PC-9 (cell line): ENCODE measurements at regions of chr3 and their contacts with region 1.

Region 1: GRCh38 chr3:194879991-194880939 is 194.6 kb downstream of the FAM43A start:
- DNase-seq: no peak
- H3K4me3 ChIP-seq: no peak overlapping the region
- H3K27ac ChIP-seq: no peak overlapping the region
- H3K4me1 ChIP-seq: no peaks in the 10 kb centered on the region
- H3K27me3 ChIP-seq: no peaks in the 10 kb centered on the region
- CTCF ChIP-seq: no peak

Region 2: DNA sequence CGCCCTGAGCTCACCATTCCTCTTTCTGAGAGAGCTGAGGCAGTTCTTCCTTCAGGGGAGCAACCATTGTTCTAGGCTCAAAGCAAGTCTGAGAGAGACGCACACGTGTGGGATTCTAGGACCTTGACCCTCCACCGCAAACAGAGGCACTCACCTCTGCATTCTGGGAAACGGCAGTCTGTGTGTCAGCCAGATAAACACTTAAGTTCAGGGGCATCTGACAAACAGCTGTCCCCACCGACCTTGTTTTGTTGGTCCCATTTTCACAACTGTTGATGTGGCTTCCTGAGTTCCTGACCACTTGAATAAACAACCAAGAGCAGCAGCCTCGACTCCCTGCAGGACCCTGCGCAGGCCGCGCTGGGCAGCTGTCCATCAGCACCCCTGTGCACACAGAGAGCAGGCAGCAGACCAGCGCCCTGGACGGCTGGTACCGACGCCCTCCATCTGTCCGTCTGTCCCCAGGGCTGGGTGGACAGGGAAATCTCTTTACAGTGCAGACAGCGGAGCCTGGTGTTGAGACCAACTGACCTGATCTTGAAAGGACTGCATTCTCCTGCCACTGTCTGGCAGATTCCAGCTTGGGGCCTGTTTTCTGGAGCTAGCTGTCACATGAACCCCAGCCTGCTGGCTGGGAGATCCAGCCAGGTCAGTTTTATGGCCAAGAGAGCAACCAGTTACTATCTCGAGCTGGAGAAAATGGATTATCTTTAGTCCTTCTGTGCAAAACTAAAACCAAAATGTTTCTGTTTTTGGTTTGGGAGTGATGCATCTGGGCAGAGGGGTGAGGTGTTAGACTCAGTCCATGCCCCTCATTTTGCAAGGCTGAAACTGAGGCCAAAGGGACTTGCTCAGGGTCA is 130.4 kb before region 1 on chr3:
- CTCF ChIA-PET with region 1: no interaction called
- POLR2A ChIA-PET with region 1: interaction called, 40 read pairs
- intact Hi-C with region 1: no loop called
- DNase-seq: peak in 1 of 2 experiments; percentile 36
- H3K4me3 ChIP-seq: no peak overlapping the region
- H3K27ac ChIP-seq: no peak overlapping the region
- H3K4me1 ChIP-seq: no peaks in the 10 kb centered on the region
- H3K27me3 ChIP-seq: no peaks in the 10 kb centered on the region
- CTCF ChIP-seq: no peak

Region 3: GRCh38 chr3:194808640-194809097 is 71.6 kb before region 1 on chr3:
- CTCF ChIA-PET with region 1: interaction called, 13 read pairs
- POLR2A ChIA-PET with region 1: no interaction called
- intact Hi-C with region 1: no loop called
- DNase-seq: peak in 1 of 2 experiments; percentile 27
- H3K4me3 ChIP-seq: no peak overlapping the region
- H3K27ac ChIP-seq: no peak overlapping the region
- H3K4me1 ChIP-seq: 0 out of 2 replicates have a peak, but pooled peaks cover 5% of the 10 kb centered on the region
- H3K27me3 ChIP-seq: 0 out of 2 replicates have a peak, but pooled peaks cover 13% of the 10 kb centered on the region
- CTCF ChIP-seq: no peak

Region 4: GRCh38 chr3:194930377-194931204 is 50.3 kb after region 1 on chr3:
- CTCF ChIA-PET with region 1: no interaction called
- POLR2A ChIA-PET with region 1: no interaction called
- intact Hi-C with region 1: no loop called
- DNase-seq: peak; percentile 47 to 85
- H3K4me3 ChIP-seq: no peak overlapping the region
- H3K27ac ChIP-seq: peak overlapping the region; percentile 20
- H3K4me1 ChIP-seq: peaks cover 41% of the 10 kb centered on the region
- H3K27me3 ChIP-seq: no peaks in the 10 kb centered on the region
- CTCF ChIP-seq: no peak